HAP-1 (cell line): ENCODE measurements at regions of chr1 and their contacts with region 1.

Region 1: DNA sequence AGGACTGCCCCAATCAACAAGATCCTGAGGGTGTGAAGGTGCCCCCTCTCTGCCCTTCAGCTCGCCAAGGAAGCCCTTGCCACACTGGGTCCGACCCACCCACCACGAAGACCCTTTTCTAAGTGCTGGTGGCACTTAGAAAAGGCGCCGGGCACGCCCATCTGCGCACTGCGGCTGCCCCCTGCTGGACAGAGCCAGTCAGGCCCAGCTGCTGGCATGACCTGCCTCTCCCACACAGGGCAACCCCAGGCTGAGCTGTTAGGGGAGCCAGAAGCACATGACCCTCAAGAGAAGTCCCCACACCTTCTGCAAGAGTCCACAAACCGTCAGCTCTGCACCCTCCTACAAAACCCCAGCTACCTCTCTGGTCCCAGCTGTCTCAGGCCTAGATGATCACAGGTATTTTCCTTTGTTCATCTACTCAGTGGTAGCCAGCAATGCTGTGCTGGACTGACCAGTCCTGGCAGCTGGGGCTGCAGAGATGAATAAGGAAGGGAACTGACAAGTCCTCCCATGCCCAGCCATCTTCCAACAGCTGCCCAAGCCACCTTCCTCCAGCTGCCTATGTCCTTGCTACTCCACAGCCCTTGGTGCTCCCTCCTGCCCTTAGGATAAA is 40.0 kb upstream of the ZC3H12A start:
- DNase-seq: peak; percentile 47 to 85
- H3K4me3 ChIP-seq: no peak overlapping the region
- H3K4me1 ChIP-seq: no peaks in the 10 kb centered on the region
- H3K27me3 ChIP-seq: peaks cover 4% of the 10 kb centered on the region

Region 2: GRCh38 chr1:36576118-36576517 is 858.3 kb before region 1 on chr1:
- in situ Hi-C with region 1: loop called (anchors 25 kb)
- DNase-seq: peak; percentile 50 to 88
- H3K4me3 ChIP-seq: no peak overlapping the region
- H3K4me1 ChIP-seq: no peaks in the 10 kb centered on the region
- H3K27me3 ChIP-seq: peaks cover 16% of the 10 kb centered on the region

Region 3: GRCh38 chr1:36703526-36704208 is 730.7 kb before region 1 on chr1:
- in situ Hi-C with region 1: loop called (anchors 25 kb)
- DNase-seq: peak; percentile 58 to 90
- H3K4me3 ChIP-seq: no peak overlapping the region
- H3K4me1 ChIP-seq: no peaks in the 10 kb centered on the region
- H3K27me3 ChIP-seq: peaks cover 30% of the 10 kb centered on the region

Region 4: DNA sequence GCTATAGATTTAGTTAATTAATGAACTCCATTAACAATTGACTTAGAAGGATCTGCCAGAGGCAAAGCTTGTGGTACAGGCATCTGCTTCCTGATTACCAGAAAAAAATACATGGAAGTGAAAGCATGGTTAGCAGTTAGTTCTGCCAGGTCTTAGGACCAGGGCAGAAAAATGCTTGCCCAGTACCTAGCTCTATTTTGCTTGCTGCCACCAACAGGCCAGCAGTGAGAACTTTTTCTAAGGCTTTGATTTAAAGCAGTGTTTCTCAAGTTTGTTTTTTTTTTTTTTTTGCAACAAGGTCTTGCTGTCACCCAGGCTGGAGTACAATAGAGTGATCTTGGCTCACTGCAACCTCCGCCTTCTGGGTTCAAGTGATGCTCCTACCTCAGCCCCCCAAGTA is 441.4 kb after region 1 on chr1:
- in situ Hi-C with region 1: no loop called
- DNase-seq: no peak
- H3K4me3 ChIP-seq: no peak overlapping the region
- H3K4me1 ChIP-seq: no peaks in the 10 kb centered on the region
- H3K27me3 ChIP-seq: no peaks in the 10 kb centered on the region